ENCODE measurements at regions of chr2 and their contacts with region 1.

Region 1: GRCh38 chr2:210617732-210618330 is 61.4 kb downstream of the CPS1 start:
- DNase-seq: no peak
- H3K4me3 ChIP-seq: no peak overlapping the region
- H3K27ac ChIP-seq: no peak overlapping the region
- H3K4me1 ChIP-seq: peaks cover 0 to 4% (median 0%) of the 10 kb centered on the region in 4 experiments; a peak in 3 of 7 replicates
- H3K27me3 ChIP-seq: no peaks in the 10 kb centered on the region
- CTCF ChIP-seq: peak in 2 of 3 experiments; percentile 62 to 67; a peak in 3 of 4 replicates
- EP300 ChIP-seq: no peak
- POLR2A ChIP-seq: no peak
- RAD21 ChIP-seq: peak; percentile 90 to 94

Region 2: DNA sequence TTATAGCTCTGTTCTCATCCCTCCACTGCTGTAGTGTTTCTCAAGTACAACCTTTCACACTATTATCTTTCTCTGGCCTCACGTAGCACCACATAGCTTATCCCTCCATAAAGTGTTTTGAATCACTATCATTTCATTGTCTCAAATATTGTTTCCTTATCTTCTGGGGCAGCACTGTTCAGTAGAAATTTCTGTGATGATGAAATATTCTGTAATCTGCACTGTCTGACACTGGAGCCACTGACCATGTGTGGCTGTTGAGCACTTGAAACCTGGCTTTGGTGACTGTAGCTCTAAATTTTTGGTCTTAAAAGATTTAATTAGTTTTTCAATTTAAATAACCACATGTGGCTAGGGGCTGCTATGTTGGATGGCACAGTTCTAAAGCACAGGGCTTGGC is 17.4 kb after region 1 on chr2:
- CTCF ChIA-PET with region 1: no interaction called
- POLR2A ChIA-PET with region 1: no interaction called
- DNase-seq: no peak
- H3K4me3 ChIP-seq: no peak overlapping the region
- H3K27ac ChIP-seq: no peak overlapping the region
- H3K4me1 ChIP-seq: peaks cover 0 to 7% (median 0%) of the 10 kb centered on the region in 4 experiments; a peak in 2 of 7 replicates
- H3K27me3 ChIP-seq: no peaks in the 10 kb centered on the region
- CTCF ChIP-seq: no peak
- EP300 ChIP-seq: no peak
- POLR2A ChIP-seq: no peak
- RAD21 ChIP-seq: no peak

Region 3: GRCh38 chr2:210663631-210664089 is 45.8 kb after region 1 on chr2:
- CTCF ChIA-PET with region 1: interaction called, 13 read pairs
- POLR2A ChIA-PET with region 1: no interaction called
- DNase-seq: no peak
- H3K4me3 ChIP-seq: no peak overlapping the region
- H3K27ac ChIP-seq: no peak overlapping the region
- H3K4me1 ChIP-seq: no peaks in the 10 kb centered on the region
- H3K27me3 ChIP-seq: no peaks in the 10 kb centered on the region
- CTCF ChIP-seq: peak in 2 of 3 experiments; percentile 50 to 62; a peak in 3 of 4 replicates
- EP300 ChIP-seq: no peak
- POLR2A ChIP-seq: no peak
- RAD21 ChIP-seq: peak; percentile 90 to 91

Measured in H1 (cell line).